Caco-2 (cell line): ENCODE measurements at regions of chr1 and their contacts with region 1.

Region 1: DNA sequence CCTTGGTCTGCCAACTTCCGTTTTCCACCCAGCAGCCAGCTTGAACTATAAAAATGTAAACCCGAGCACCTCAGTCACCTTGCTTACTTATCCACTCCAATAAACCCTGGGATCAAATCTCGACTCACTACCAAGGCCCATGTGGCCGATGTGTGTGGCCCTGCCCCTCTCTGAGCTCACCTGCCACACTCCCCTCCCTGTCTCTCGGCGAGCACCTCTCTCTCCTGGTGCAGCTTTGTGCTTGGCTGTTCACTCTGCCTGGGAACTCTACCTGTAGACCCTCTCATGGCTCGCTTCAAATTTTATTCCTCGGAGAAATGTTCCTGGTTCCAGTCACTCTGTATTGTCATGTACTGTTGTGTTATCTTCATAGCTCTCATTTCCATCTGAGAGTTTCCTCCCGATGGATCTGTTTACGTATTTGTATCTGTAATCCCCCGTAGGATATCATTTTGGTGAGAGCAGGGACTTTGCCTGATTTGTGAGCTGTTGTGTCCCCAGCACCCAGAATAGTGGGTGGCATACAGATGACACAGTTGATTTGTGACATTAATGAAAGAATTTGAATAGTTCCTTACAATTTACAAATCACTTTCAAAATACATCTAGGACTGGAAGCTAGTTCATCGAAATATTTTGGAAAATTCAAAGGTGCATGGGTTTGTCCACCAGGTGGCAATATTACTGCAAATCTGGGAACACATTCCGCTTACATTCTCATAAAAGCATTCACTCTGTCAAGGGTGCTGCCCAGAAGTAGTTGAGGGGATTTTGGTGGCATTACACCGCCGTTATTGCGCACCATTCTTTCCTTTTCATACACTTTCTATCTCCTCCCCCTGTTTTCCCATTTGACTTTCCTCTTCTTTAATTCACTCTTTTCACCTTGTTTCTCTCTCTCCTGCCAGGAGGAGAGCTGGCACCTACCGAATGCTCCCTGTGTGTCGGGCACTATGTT is 95.3 kb downstream of the ABCA4 start:
- DNase-seq: peak in 1 of 2 experiments; percentile 45
- H3K4me3 ChIP-seq: no peak overlapping the region
- H3K4me3 Mint-ChIP-seq: no peak overlapping the region
- H3K27ac Mint-ChIP-seq: peak overlapping the region; percentile 43
- H3K4me1 ChIP-seq: peaks cover 23% of the 10 kb centered on the region
- H3K4me1 Mint-ChIP-seq: peaks cover 22% of the 10 kb centered on the region
- H3K27me3 ChIP-seq: no peaks in the 10 kb centered on the region
- H3K27me3 Mint-ChIP-seq: no peaks in the 10 kb centered on the region
- CTCF ChIP-seq: peak; percentile 43 to 51

Region 2: GRCh38 chr1:94039514-94039870 is 13.8 kb after region 1 on chr1:
- CTCF ChIA-PET with region 1: interaction called, 17 read pairs
- POLR2A ChIA-PET with region 1: no interaction called
- intact Hi-C with region 1: no loop called
- DNase-seq: peak; percentile 66 to 69
- H3K4me3 ChIP-seq: no peak overlapping the region
- H3K4me3 Mint-ChIP-seq: no peak overlapping the region
- H3K27ac Mint-ChIP-seq: no peak overlapping the region
- H3K4me1 ChIP-seq: 0 out of 2 replicates have a peak, but pooled peaks cover 5% of the 10 kb centered on the region
- H3K4me1 Mint-ChIP-seq: peaks cover 6% of the 10 kb centered on the region
- H3K27me3 ChIP-seq: no peaks in the 10 kb centered on the region
- H3K27me3 Mint-ChIP-seq: no peaks in the 10 kb centered on the region
- CTCF ChIP-seq: peak; percentile 78 to 81